BJ (cell line): ENCODE measurements at regions of chr20 and their contacts with region 1.

Region 1: DNA sequence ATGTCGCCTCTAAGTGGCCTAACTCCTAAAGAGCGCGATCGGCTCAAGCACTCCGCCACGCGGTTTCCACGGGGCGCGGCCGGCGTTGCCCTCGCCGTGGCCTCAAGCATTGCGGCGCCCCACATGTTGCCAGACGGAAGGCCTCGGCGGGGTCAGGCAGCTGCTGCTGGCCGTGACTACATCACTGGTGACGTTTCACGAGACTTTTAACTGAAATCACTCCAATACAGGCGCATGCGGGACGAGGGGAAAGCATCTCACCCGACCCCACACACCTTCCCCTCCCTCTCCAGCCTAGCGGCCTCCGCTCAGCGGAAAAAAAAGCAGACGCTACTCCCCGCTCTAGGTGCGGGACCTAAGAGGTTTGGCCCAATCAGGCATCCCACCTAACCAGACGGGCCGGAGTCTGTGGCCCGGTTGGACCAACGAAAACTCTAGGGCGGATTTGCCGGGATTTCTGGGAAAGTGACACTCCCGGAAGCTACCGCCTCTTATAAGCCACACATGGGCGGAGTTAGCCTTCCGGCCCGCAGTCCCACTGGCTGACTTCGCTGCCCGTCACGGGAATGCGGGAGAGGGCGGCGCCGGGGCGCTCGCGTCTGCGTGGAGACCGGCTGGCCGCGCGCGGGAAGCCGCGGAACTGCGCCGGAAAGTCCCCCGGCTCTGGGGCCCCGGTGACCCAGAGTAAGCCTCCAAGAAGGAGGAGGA is at the start of gene NXT1:
- DNase-seq: peak; percentile 95
- H3K4me3 ChIP-seq: peak within 1 kb of the TSS; percentile 76
- H3K27me3 ChIP-seq: no peaks in the 10 kb centered on the region
- CTCF ChIP-seq: no peak
- polyA plus RNA-seq, gene NXT1: 19.2 and 24.2 TPM in 2 replicates

Region 2: DNA sequence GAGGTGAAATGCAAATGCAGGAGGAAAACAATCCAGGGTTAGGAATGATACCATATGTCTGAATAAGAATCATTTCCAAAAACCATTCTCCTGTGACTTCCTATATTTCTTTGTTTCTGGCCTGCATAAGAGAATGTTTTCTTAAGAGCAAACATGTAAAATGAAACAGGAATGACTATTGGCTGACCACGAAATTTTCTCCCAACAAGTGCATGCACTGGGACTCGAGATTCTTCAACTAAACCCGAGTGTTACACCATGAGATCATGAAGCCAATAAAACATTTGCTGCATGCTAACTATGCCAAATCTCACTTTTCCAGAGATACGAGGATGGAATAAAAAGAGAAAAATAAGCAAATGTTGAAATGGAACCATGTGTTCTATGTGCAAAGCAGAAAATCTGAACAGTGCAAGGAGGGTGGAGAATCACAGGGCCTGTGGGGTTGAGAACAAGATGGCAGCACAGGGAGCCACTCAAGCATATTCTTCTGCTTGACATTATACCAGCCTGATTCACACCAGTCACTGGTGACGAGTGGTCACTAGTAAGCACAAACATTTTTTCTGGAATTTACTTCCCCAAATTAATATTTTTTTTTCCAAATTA is 553.8 kb before region 1 on chr20:
- CTCF ChIA-PET with region 1: interaction called, 4 read pairs
- POLR2A ChIA-PET with region 1: interaction called, 15 read pairs
- DNase-seq: peak; percentile 75
- H3K4me3 ChIP-seq: no peak overlapping the region
- H3K27me3 ChIP-seq: no peaks in the 10 kb centered on the region; the same call in 1 of the 2 replicates
- CTCF ChIP-seq: no peak

Region 3: DNA sequence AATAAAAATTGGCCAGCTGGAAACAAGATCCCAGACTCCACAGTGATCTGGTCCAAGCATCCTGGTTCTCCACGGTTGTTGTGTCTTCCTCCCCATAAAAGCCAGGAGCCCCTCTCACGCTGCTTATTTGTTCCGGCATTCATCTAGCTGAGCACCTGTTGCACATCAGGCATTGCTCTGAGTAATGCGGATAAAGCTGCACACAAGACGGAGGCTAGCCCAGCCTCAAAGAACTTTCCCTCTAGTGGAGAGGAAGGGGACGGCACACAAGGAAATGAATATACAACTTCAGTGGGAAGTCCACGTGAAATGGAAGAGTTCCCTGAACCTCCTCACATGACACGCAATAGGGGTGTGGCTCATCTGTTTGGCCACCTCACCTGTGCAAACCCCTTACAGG is 30.0 kb before region 1 on chr20:
- CTCF ChIA-PET with region 1: no interaction called
- POLR2A ChIA-PET with region 1: interaction called, 12 read pairs
- DNase-seq: no peak
- H3K4me3 ChIP-seq: no peak overlapping the region
- H3K27me3 ChIP-seq: no peaks in the 10 kb centered on the region
- CTCF ChIP-seq: peak; percentile 43